Activated CD4-positive, alpha-beta T cell treated with anti-CD3 and anti-CD28 coated beads, Interleukin-2, amount 10 ng/mL, durations not matched to agents 24 days and 14 days (primary cell): ENCODE measurements at regions of chr5 and their contacts with region 1.

Region 1: DNA sequence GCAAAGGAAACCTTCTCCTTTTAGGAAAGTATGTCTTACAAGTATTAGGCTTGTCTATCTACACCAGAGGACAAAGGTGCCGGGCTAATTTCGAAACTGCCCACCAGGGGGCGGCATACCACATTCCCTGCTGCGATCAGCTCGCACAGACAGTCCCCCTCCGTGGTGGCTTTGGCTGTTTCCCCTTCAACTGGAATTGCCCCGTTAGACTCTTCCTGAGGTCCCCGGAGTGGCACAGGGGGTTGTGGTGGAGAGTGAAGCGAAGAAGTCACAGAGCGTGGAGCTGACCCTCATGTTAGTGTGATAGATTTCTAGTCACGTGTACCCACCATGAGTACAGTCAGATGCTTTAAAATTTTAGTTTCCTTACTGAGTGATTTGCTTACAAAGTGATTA is 17.5 kb downstream of the PTTG1 start:
- DNase-seq: peak; percentile 97
- H3K4me3 Mint-ChIP-seq: peak overlapping the region; percentile 92
- H3K27ac Mint-ChIP-seq: peak overlapping the region; percentile 99
- H3K4me1 Mint-ChIP-seq: peaks cover 61% of the 10 kb centered on the region
- H3K27me3 Mint-ChIP-seq: no peaks in the 10 kb centered on the region

Region 2: DNA sequence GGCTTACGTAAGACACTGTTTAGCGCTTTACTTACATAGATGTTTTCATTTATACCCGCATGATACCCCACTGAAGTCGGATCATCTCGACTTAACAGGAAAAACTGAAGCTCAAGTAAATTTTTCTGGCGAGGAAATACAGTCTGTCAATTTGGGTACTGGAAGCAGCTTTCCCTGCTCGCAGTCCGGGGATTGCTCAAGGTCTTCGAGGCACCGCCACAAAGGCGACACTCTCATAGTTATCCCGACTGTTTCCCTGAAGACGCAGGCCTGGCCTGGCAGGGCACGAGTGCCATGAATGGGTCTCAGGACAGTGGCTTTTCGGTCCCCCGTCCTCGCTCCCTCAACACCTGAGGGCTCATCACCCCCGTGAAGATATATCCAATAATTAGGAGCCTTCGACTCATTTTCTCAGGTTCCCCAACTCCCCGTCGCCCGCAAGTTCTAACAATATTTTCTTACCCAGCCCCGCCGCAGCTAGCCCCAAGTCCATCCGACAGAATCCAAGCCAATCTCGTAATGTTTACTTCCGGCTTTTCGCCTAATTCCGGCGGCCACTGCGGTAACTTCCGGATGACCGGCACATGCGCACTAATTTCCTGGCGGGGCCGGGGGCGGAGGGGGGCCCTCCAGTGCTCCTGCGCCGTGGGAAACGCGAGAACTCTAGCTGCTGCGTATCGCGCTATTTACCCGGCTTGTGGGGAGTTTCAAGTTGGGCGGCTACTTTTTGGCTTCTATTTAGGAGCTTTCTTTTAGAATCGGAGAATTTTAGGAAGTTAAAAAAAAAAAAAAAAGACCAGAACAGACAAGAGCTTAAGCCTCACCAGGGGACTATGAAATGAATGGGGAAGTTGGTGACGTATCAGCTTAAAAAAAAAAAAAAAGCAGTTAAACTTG is 20.4 kb before region 1 on chr5 and contains the start of gene SLU7:
- intact Hi-C with region 1: loop called (anchors 1 kb)
- DNase-seq: peak; percentile 98
- H3K4me3 Mint-ChIP-seq: peak within 1 kb of the TSS; percentile 97
- H3K27ac Mint-ChIP-seq: peak within 1 kb of the TSS; percentile 97
- H3K4me1 Mint-ChIP-seq: peaks cover 61% of the 10 kb centered on the region
- H3K27me3 Mint-ChIP-seq: no peaks in the 10 kb centered on the region
- total RNA-seq, gene SLU7: 38.4 and 39.8 TPM in 2 replicates

Region 3: GRCh38 chr5:160467555-160468362 is 28.6 kb after region 1 on chr5:
- intact Hi-C with region 1: loop called (anchors 1 kb)
- DNase-seq: peak; percentile 96
- H3K4me3 Mint-ChIP-seq: peak overlapping the region; percentile 100
- H3K27ac Mint-ChIP-seq: peak overlapping the region; percentile 100
- H3K4me1 Mint-ChIP-seq: peaks cover 62% of the 10 kb centered on the region
- H3K27me3 Mint-ChIP-seq: no peaks in the 10 kb centered on the region

Region 4: GRCh38 chr5:160508780-160509361 is 69.7 kb after region 1 on chr5:
- intact Hi-C with region 1: loop called (anchors 1 kb)
- DNase-seq: peak; percentile 93
- H3K4me3 Mint-ChIP-seq: peak overlapping the region; percentile 31
- H3K27ac Mint-ChIP-seq: peak overlapping the region; percentile 67
- H3K4me1 Mint-ChIP-seq: peaks cover 52% of the 10 kb centered on the region
- H3K27me3 Mint-ChIP-seq: peaks cover 5% of the 10 kb centered on the region

Region 5: DNA sequence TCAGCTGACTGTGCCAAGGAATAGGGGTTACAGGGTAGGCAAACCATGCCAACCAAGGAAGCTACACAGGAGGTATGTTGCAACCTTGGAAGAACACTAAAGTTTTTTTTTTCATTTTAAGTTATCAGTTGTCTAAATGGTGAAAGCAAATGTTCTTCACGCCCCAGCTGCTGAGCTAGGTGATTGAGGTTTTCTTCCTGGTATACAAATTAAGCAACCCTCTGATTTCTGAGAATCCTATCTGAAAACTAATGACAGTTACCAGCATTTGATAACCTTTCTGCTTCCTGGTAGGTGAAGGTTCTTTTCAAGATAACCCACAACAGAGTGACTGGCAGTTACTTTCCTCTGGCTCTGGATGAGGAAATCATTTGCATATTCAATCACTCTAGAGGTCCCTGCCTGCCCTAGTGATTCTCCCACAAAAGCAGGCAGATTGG is 217.9 kb after region 1 on chr5:
- intact Hi-C with region 1: loop called (anchors 10 kb)
- DNase-seq: peak; percentile 60
- H3K4me3 Mint-ChIP-seq: peak overlapping the region; percentile 18
- H3K27ac Mint-ChIP-seq: peak overlapping the region; percentile 56
- H3K4me1 Mint-ChIP-seq: peaks cover 19% of the 10 kb centered on the region
- H3K27me3 Mint-ChIP-seq: peaks cover 1% of the 10 kb centered on the region

Region 6: DNA sequence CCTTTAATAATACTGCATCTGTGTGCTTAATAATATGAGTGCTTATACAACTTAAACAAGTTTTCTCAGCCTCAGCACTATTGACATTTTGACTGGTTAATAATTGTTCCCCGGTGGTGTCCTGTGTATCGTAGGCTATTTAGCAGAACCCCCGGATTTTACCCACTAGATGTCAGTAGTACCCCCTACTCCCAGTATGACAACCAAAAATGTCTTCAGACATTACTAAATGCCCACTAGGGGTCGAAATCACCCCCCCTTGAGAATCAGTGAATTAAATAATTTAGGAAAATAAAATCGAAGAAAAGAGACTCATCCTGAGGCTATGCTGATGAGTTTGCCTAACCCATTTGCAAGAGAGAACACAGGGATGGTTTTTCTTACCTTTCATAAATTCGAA is 246.5 kb after region 1 on chr5:
- intact Hi-C with region 1: no loop called
- DNase-seq: no peak
- H3K4me3 Mint-ChIP-seq: no peak overlapping the region
- H3K27ac Mint-ChIP-seq: no peak overlapping the region
- H3K4me1 Mint-ChIP-seq: no peaks in the 10 kb centered on the region
- H3K27me3 Mint-ChIP-seq: peaks cover 5% of the 10 kb centered on the region

Region 7: GRCh38 chr5:161544350-161544765 is 1105.2 kb after region 1 on chr5:
- intact Hi-C with region 1: loop called (anchors 10 kb)
- DNase-seq: peak; percentile 70
- H3K4me3 Mint-ChIP-seq: no peak overlapping the region
- H3K27ac Mint-ChIP-seq: no peak overlapping the region
- H3K4me1 Mint-ChIP-seq: peaks cover 9% of the 10 kb centered on the region
- H3K27me3 Mint-ChIP-seq: peaks cover 48% of the 10 kb centered on the region